ENCODE measurements at regions of chr2 and their contacts with region 1.

Region 1: DNA sequence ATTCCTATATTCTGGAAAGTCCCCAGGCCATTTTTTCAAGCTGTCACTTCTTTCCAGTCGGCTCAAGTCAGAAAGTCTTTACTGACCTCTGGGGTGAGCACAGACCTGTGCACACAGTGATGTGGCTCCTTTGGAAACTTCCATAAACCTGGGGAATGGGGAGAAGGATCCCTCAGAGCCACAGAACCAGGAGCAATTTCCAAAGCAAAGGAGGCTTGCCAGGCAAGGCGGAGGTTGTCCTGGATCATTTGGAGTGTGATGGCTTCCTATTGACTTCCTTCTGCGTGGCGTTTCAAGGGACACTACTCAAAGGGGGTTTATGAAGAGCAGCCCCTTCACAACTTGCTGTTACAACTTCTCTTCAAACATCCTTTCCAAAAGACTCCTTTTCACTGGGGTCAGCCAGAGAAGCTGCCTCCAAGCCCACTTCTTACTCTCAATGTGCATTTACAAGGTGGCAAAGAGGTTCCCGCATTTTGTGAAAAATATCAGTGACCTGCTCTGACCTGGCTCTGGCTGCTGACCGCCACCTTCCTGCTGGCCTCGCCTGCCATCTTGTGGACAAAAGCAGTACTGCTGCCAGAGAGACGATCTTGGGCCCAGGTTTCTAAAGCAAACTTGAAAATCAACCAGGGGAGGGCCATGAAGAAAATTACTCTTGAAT is 18.2 kb upstream of the TMEM247 start:
- DNase-seq: peak; percentile 85
- H3K4me3 Mint-ChIP-seq: no peak overlapping the region
- H3K27ac Mint-ChIP-seq: no peak overlapping the region
- H3K4me1 Mint-ChIP-seq: peaks cover 7% of the 10 kb centered on the region
- H3K27me3 Mint-ChIP-seq: no peaks in the 10 kb centered on the region

Region 2: DNA sequence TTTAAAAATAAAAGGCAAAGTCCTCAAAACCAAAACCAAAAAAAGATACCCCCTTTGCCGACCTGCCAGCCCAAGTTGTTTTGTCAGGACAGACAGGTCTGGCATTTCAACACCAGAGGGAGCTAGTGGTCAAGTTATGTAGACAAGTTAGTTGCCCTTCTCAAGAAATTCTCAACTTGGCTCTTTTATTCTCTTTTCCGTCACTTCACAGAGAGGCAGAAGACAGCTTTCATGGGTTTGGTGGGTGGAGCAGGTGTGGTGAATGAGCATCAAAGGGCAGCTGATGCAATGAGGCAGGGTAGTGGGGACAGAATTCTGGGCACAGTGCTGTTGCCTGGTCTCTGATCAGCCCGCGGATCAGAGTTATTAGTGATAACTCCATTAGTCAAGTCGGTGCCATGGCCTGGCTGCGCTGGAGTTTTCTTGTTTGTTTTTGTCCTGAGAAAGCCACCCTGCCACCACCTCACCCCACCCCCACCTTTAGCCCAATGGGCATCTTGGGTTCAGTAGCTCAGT is 467.6 kb before region 1 on chr2:
- CTCF ChIA-PET with region 1: interaction called, 25 read pairs
- POLR2A ChIA-PET with region 1: no interaction called
- intact Hi-C with region 1: loop called (anchors 1 kb)
- DNase-seq: peak; percentile 66
- H3K4me3 Mint-ChIP-seq: no peak overlapping the region
- H3K27ac Mint-ChIP-seq: no peak overlapping the region
- H3K4me1 Mint-ChIP-seq: peaks cover 5% of the 10 kb centered on the region
- H3K27me3 Mint-ChIP-seq: no peaks in the 10 kb centered on the region

Region 3: GRCh38 chr2:46010925-46011490 is 450.1 kb before region 1 on chr2:
- CTCF ChIA-PET with region 1: interaction called, 12 read pairs
- POLR2A ChIA-PET with region 1: no interaction called
- intact Hi-C with region 1: loop called (anchors 1 kb)
- DNase-seq: no peak
- H3K4me3 Mint-ChIP-seq: no peak overlapping the region
- H3K27ac Mint-ChIP-seq: no peak overlapping the region
- H3K4me1 Mint-ChIP-seq: peaks cover 11% of the 10 kb centered on the region
- H3K27me3 Mint-ChIP-seq: no peaks in the 10 kb centered on the region